AG04449 (cell line): ENCODE measurements at regions of chr7 and their contacts with region 1.

Region 1: GRCh38 chr7:134432296-134433152 is 26.4 kb downstream of the AKR1B1 start:
- DNase-seq: no peak
- H3K4me3 ChIP-seq: peak overlapping the region; percentile 53
- CTCF ChIP-seq: peak; percentile 74

Region 2: DNA sequence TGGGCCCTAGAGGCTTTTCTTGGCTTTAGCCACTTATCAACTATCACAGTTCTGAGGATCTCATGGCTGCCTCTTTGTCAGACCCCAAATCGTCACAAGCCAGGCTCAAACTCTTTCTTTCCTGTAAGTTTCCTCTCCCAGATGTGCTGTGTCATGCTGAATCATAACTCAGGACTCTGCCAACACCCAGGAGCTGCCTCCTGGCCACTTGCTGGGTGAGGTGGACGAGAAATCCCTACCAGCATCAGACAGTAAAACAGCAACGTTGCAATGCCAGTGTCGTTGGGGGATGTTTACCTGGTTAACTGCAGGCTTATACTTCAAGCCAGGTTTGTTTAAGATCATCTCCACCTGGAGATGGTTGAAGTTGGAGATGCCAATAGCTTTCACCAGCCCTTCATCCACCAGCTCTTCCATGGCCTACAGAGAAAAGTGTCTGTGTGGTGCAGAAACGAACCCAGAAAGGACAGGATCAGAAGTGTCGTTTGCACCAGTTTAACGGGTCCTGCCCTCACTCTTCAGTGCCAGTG is 16.2 kb after region 1 on chr7:
- CTCF ChIA-PET with region 1: interaction called, 112 read pairs
- POLR2A ChIA-PET with region 1: interaction called, 4 read pairs
- DNase-seq: peak; percentile 60
- H3K4me3 ChIP-seq: no peak overlapping the region
- CTCF ChIP-seq: no peak

Region 3: GRCh38 chr7:134470864-134471263 is 38.3 kb after region 1 on chr7:
- CTCF ChIA-PET with region 1: interaction called, 13 read pairs
- POLR2A ChIA-PET with region 1: no interaction called
- DNase-seq: no peak
- H3K4me3 ChIP-seq: no peak overlapping the region
- CTCF ChIP-seq: no peak

Region 4: GRCh38 chr7:134520130-134520529 is 87.6 kb after region 1 on chr7:
- CTCF ChIA-PET with region 1: interaction called, 417 read pairs
- POLR2A ChIA-PET with region 1: no interaction called
- DNase-seq: no peak
- H3K4me3 ChIP-seq: no peak overlapping the region
- CTCF ChIP-seq: no peak

Region 5: GRCh38 chr7:134547397-134548054 is 115.0 kb after region 1 on chr7:
- CTCF ChIA-PET with region 1: interaction called, 98 read pairs
- POLR2A ChIA-PET with region 1: interaction called, 4 read pairs
- DNase-seq: no peak
- H3K4me3 ChIP-seq: peak overlapping the region; percentile 57
- CTCF ChIP-seq: peak; percentile 65

Region 6: GRCh38 chr7:134605973-134606923 is 173.7 kb after region 1 on chr7:
- CTCF ChIA-PET with region 1: interaction called, 155 read pairs
- POLR2A ChIA-PET with region 1: no interaction called
- DNase-seq: no peak
- H3K4me3 ChIP-seq: peak overlapping the region; percentile 6; the same call in 1 of the 2 replicates
- CTCF ChIP-seq: peak; percentile 77